ENCODE measurements at regions of chr22 and their contacts with region 1.

Region 1: GRCh38 chr22:32265882-32266767 is 11.0 kb upstream of the SLC5A4 start:
- DNase-seq: peak in 4 of 5 donors; percentile 56 to 73 (median 58)
- ATAC-seq: peak in 3 of 4 donors; percentile 59 to 70 (median 61)
- H3K4me3 ChIP-seq: peak overlapping the region in 2 of 12 donors; percentile 12 to 28
- H3K27ac ChIP-seq: no peak overlapping the region
- H3K4me1 ChIP-seq: peaks cover 0 to 8% (median 0%) of the 10 kb centered on the region in 12 donors
- H3K27me3 ChIP-seq: no peaks in the 10 kb centered on the region
- CTCF ChIP-seq: peak; percentile 74 to 90 (median 86)
- POLR2A ChIP-seq: no peak

Region 2: GRCh38 chr22:32144496-32145274 is 121.4 kb before region 1 on chr22:
- intact Hi-C with region 1: loop called in 1 of 10 experiments (anchors 5 kb)
- DNase-seq: no peak
- ATAC-seq: no peak
- H3K4me3 ChIP-seq: no peak overlapping the region
- H3K27ac ChIP-seq: no peak overlapping the region
- H3K4me1 ChIP-seq: peaks cover 0 to 19% (median 0%) of the 10 kb centered on the region in 12 donors
- H3K27me3 ChIP-seq: no peaks in the 10 kb centered on the region
- CTCF ChIP-seq: no peak
- POLR2A ChIP-seq: no peak

Region 3: DNA sequence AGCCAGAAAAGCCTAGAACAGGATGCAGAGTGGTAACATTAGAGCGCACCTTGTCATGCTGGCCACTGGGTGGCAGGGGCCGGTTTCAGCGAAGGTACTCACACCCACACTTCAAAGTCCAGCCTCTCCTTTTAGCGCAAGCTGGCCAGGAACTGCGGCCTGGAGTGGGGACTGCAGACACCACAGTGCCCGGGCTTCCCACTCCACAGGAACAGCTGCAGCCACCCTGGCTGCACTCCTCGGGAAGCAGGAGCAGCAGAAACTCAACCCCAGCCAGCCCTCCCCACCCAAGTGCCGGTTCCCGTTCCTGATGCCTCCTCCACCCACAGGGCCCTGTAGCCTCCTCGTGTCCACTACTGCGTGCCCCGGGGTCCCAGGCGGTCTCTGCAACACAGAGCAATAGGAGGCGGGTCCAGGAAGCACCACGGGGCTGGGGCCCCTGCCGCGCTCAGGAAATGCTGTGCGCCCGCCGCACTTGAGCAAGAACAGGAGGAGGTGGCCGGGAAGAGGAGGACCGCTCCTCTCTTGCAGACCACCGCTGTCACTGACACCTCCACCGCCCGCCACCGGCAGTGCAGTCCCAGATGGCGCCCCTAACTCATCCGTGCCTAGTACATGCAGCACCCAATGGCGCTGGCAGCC is 63.5 kb before region 1 on chr22:
- intact Hi-C with region 1: loop called in 1 of 10 experiments (anchors 2 kb)
- DNase-seq: peak in 3 of 5 donors; percentile 33 to 57 (median 53)
- ATAC-seq: peak; percentile 63 to 77 (median 73)
- H3K4me3 ChIP-seq: peak overlapping the region in 10 of 12 donors; percentile 0 to 43 (median 27)
- H3K27ac ChIP-seq: no peak overlapping the region
- H3K4me1 ChIP-seq: peaks cover 0 to 22% (median 0%) of the 10 kb centered on the region in 12 donors
- H3K27me3 ChIP-seq: peaks cover 0 to 31% (median 13%) of the 10 kb centered on the region in 9 donors
- CTCF ChIP-seq: peak in 11 of 12 donors; percentile 23 to 56 (median 44)
- POLR2A ChIP-seq: no peak

Region 4: DNA sequence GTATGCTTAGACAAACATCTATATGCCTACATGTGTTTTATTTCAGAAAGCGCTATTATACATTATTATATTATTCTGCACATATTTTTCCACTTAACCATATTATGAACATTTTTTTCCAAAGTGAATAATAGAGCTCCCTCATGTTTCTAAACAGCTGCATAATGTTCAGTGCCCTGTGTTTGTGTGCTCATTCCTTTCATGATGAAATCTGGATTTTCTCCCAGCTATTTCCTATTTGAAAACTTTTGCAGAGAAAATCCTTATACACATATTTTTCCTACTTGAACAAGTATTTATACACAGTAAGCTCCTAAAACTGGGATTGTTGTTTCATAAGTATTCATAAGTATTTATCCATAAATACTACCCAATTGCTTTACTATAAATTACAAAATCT is 43.1 kb before region 1 on chr22:
- intact Hi-C with region 1: no loop called
- DNase-seq: no peak
- ATAC-seq: no peak
- H3K4me3 ChIP-seq: no peak overlapping the region
- H3K27ac ChIP-seq: no peak overlapping the region
- H3K4me1 ChIP-seq: peaks cover 0 to 10% (median 0%) of the 10 kb centered on the region in 12 donors
- H3K27me3 ChIP-seq: peaks cover 0 to 2% (median 0%) of the 10 kb centered on the region in 9 donors
- CTCF ChIP-seq: no peak
- POLR2A ChIP-seq: no peak

Region 5: GRCh38 chr22:32281072-32281471 is 14.9 kb after region 1 on chr22:
- intact Hi-C with region 1: no loop called
- DNase-seq: no peak
- ATAC-seq: no peak
- H3K4me3 ChIP-seq: no peak overlapping the region
- H3K27ac ChIP-seq: no peak overlapping the region
- H3K4me1 ChIP-seq: no peaks in the 10 kb centered on the region
- H3K27me3 ChIP-seq: peaks cover 0 to 8% (median 0%) of the 10 kb centered on the region in 9 donors
- CTCF ChIP-seq: no peak
- POLR2A ChIP-seq: no peak

Region 6: GRCh38 chr22:32325416-32325801 is 59.3 kb after region 1 on chr22:
- intact Hi-C with region 1: no loop called
- DNase-seq: no peak
- ATAC-seq: peak in 1 of 4 donors; percentile 36
- H3K4me3 ChIP-seq: no peak overlapping the region
- H3K27ac ChIP-seq: no peak overlapping the region
- H3K4me1 ChIP-seq: no peaks in the 10 kb centered on the region
- H3K27me3 ChIP-seq: peaks cover 0 to 2% (median 0%) of the 10 kb centered on the region in 9 donors
- CTCF ChIP-seq: no peak
- POLR2A ChIP-seq: no peak